Activated CD4-positive, alpha-beta memory T cell treated with anti-CD3 and anti-CD28 coated beads, Interleukin-2, amount 10 ng/mL, durations not matched to agents 7 days and 5 days (primary cell): ENCODE measurements at regions of chr5 and their contacts with region 1.

Region 1: GRCh38 chr5:157743163-157744050 is at the start of gene LSM11:
- DNase-seq: peak; percentile 93
- H3K4me3 Mint-ChIP-seq: peak within 1 kb of the TSS; percentile 82
- H3K27ac Mint-ChIP-seq: peak within 1 kb of the TSS; percentile 76
- H3K4me1 Mint-ChIP-seq: peaks cover 41% of the 10 kb centered on the region
- H3K27me3 Mint-ChIP-seq: no peaks in the 10 kb centered on the region
- total RNA-seq, gene LSM11: 5.4 to 5.8 TPM

Region 2: DNA sequence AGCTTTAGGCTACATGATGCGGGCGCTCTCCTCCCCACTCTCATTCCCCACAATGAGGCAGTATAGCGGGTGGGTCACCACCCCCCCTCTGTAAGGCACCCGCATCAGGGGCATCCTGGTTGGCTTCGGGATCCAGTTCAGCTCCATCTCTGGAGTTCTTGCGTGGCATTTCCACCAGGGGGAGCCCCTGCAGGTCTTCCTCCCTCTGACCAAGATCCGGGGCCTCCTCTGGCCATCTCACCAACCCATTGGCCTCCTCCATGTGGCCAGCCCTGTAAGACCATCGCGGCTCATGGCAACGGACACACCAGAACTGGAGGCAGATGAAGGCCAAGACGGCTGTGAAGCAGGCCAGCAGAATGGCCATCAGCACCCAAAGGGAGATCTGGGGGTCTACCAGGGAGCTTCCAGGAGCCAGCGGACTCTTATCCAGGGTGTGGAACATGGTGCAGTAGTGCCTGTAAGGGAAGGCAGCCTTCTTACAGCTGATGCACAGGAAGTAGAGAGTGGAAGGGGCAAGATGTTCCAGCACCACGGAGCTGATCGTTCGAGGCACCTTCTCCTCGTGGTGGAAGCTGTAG is 400.5 kb before region 1 on chr5:
- CTCF ChIA-PET with region 1: interaction called, 35 read pairs
- POLR2A ChIA-PET with region 1: no interaction called
- DNase-seq: peak; percentile 34
- H3K4me3 Mint-ChIP-seq: no peak overlapping the region
- H3K27ac Mint-ChIP-seq: no peak overlapping the region
- H3K4me1 Mint-ChIP-seq: peaks cover 30% of the 10 kb centered on the region
- H3K27me3 Mint-ChIP-seq: no peaks in the 10 kb centered on the region

Region 3: DNA sequence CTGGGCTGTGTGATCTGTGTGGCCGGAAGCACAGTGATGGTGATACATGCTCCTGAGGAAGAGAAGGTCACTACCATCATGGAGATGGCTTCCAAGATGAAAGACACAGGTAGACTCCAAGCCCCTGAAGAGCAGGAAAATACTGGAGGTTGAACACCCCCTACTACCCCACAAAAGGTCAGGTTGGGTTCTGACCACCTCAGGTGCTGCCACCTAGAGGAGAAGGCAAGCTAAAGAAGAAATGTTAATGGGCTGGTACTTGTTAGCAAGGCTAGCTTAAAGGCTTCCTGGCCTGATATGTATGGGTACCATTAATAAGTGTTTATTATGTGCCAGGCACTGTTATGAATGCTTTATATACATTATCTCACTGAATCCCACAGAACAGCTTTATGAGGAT is 271.7 kb before region 1 on chr5:
- CTCF ChIA-PET with region 1: interaction called, 10 read pairs
- POLR2A ChIA-PET with region 1: no interaction called
- DNase-seq: no peak
- H3K4me3 Mint-ChIP-seq: no peak overlapping the region
- H3K27ac Mint-ChIP-seq: no peak overlapping the region
- H3K4me1 Mint-ChIP-seq: peaks cover 4% of the 10 kb centered on the region
- H3K27me3 Mint-ChIP-seq: no peaks in the 10 kb centered on the region

Region 4: DNA sequence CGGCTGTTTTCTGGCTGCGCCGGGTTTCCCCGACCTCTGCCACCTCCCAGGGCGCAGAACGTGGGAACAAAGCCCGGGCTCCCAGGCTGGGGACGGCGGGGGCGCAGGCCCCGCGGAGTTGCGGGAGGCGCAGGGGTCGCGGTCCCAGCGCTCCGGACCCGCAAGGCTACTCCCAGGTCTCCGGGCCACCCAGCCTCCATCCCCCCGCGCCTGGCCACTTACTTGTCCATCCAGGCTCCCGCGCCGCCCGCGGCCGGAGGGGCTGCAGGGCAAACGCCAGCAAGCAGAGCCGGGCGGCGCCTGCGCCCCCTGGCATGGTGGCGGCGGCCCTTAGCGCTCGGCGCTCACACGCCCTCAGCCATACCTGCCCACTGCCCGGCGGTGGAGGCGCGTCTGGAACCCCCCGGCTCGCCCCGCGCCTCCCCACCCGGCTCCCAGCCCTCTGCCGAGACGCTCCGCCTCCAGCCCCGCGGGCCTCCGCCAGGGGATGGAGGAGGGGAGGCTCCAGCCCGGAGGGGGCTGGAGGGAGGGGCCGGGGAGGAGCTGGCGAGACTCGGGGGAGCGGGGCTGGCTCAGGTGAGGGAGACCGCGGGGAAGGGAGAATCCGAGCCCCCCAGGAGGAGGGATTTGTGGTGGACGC is 167.9 kb before region 1 on chr5 and contains the start of gene ADAM19:
- CTCF ChIA-PET with region 1: interaction called, 10 read pairs
- POLR2A ChIA-PET with region 1: no interaction called
- DNase-seq: peak; percentile 67
- H3K4me3 Mint-ChIP-seq: peak within 1 kb of the TSS; percentile 92
- H3K27ac Mint-ChIP-seq: peak within 1 kb of the TSS; percentile 88
- H3K4me1 Mint-ChIP-seq: peaks cover 59% of the 10 kb centered on the region
- H3K27me3 Mint-ChIP-seq: no peaks in the 10 kb centered on the region
- total RNA-seq, gene ADAM19: 309 to 313 TPM

Region 5: GRCh38 chr5:157697453-157697852 is 46.0 kb before region 1 on chr5:
- CTCF ChIA-PET with region 1: no interaction called
- POLR2A ChIA-PET with region 1: no interaction called
- DNase-seq: no peak
- H3K4me3 Mint-ChIP-seq: no peak overlapping the region
- H3K27ac Mint-ChIP-seq: no peak overlapping the region
- H3K4me1 Mint-ChIP-seq: no peaks in the 10 kb centered on the region
- H3K27me3 Mint-ChIP-seq: no peaks in the 10 kb centered on the region

Region 6: DNA sequence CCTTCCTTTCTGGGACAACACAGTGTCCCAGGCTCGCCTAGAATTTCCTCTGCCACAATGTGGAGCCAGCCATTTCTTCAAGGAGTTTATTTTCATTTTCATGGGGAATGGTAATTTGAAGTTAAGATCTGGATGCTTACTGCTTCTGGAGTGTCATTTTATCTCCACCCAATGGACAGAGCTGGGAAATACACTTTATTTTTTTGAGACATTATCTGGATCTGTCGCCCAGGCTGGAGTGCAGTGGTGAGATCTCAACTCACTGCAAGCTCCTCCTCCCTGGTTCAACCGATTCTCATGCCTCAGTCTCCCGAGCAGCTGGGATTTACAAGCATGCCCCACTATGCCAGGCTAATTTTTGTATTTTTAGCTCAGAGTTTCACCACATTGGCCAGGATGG is 24.9 kb before region 1 on chr5:
- CTCF ChIA-PET with region 1: interaction called, 28 read pairs
- POLR2A ChIA-PET with region 1: no interaction called
- DNase-seq: no peak
- H3K4me3 Mint-ChIP-seq: no peak overlapping the region
- H3K27ac Mint-ChIP-seq: no peak overlapping the region
- H3K4me1 Mint-ChIP-seq: peaks cover 33% of the 10 kb centered on the region
- H3K27me3 Mint-ChIP-seq: no peaks in the 10 kb centered on the region